Aorta (tissue), 5 donors: ENCODE measurements at regions of chr1 and their contacts with region 1.

Region 1: DNA sequence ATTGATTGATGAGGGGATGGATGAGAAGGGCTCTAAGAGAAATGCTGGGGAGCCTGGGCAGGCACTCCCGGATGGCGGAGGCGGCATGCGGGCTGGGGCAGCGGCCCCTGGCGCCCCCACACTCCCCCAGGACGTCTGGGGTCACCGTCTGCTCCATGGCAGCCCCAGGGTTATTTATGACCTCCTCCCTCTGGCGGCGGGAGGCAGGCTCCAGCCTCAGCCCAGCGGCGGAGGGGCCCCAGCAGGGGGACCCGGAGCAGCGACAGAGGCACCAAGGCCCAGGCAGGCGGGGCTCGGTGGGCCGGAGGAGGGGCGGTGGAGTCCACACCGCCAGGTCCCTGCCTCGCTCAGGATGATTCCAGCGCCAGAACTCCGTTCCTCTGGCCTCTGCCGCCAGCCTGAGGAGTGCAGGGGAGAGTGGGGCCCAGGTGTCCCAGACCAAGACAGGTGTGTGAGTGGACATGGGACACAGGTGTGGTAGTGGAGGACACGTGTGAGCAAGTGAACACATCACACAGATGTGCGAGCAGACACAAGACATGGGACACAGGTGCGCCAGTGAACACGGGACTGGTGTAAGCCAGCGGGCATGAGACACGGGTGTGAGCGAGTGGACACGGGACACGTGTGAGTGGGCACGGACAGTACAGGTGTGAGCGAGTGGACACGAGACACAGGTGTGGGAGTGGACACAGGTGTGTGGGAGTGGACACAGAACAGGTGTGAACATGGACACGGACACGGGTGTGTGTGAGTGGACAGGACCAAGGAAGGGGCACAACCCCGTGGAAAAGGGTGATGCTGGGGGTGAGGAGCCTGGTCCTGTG is 2.5 kb upstream of the SAMD11 start:
- DNase-seq: peak; percentile 78 to 91
- ATAC-seq: peak; percentile 78
- H3K4me3 ChIP-seq: no peak overlapping the region
- H3K27ac ChIP-seq: no peak overlapping the region
- H3K4me1 ChIP-seq: no peaks in the 10 kb centered on the region
- H3K27me3 ChIP-seq: no peaks in the 10 kb centered on the region

Region 2: DNA sequence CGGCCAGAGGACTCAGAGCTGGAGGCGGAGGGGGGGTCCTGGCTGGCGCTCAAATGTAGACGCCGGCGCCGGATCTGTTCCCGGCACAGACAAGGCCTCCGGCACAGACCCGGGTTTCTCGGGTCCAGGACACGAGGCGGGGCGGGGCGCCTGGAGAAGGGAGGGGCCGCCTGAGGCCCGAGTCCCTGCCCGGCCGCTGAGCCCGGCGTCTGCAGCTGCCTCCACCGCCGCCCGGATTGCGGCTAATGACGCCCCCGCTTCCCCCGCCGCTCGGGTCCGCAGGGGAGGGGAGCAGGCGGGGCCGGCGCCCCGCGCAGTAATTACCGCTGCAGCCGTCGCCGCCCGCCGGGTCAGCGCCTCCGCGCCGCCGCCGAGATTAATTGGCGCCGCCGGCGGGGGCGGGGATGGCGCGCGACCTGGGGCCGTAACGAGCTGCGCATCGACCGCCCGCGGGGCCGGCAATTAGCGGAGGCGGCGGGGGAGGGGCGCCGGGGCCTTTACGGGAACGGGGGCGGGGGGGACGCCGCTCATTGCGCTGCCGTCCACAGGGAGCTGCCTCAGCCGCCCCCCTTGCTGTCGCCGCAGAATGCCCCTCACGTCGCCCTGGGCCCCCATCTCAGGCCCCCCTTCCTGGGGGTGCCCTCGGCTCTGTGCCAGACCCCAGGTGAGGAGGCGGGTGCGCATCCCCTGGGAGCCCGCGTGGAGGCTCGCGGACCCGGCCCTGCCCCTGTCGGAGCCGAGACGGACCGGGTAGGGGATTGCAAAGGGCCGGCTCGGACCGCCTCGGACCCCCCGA is 20.6 kb after region 1 on chr1:
- intact Hi-C with region 1: loop called in 1 of 2 experiments (anchors 2 kb)
- DNase-seq: peak; percentile 90 to 94
- ATAC-seq: peak; percentile 79
- H3K4me3 ChIP-seq: peak overlapping the region in 1 of 2 donors; percentile 12
- H3K27ac ChIP-seq: no peak overlapping the region
- H3K4me1 ChIP-seq: no peaks in the 10 kb centered on the region
- H3K27me3 ChIP-seq: no peaks in the 10 kb centered on the region

Region 3: DNA sequence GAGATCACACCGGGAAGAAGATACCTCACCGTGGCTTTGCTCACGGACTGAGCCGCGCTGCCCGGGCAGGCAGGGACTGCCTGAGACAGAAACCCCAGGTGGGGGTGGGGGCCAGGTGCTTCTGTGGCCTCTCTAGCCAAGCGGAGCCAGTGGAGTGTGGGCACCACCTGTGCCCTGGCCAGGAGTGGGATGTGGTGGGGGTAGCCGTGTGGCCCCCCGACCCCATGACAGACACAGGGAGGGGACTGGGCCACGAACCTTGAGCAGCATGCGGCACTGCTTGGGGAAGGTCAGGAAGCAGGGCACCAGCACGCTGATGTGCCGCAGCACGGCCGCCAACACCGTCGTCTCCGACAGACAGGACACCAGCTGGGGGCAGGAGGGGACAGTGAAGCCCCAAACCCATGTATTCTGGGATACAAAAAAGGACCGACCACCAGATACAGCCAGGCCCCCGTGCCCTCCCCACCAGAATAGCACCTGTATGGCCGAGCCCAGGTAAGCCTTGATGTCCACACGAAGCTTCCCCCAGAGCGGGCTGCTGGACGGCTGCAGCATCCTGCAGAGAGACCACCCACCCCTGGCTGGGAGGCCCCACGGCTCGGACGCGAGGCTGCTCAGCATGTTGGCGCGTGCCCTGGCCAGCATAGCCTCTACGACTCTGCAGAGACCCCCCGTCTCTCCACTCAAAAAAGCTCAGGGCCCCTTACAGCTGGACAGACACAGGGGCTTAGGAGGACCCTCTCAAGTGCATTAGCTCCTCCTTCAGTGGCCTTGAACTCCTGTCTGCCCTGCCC is 32.5 kb after region 1 on chr1:
- intact Hi-C with region 1: no loop called
- DNase-seq: no peak
- ATAC-seq: no peak
- H3K4me3 ChIP-seq: no peak overlapping the region
- H3K27ac ChIP-seq: no peak overlapping the region
- H3K4me1 ChIP-seq: no peaks in the 10 kb centered on the region
- H3K27me3 ChIP-seq: no peaks in the 10 kb centered on the region

Region 4: GRCh38 chr1:999725-1000356 is 78.6 kb after region 1 on chr1 and contains the start of gene HES4:
- intact Hi-C with region 1: loop called in 1 of 2 experiments (anchors 10 kb)
- DNase-seq: peak; percentile 93 to 98
- ATAC-seq: peak; percentile 88
- H3K4me3 ChIP-seq: peak within 1 kb of the TSS; percentile 62 to 69
- H3K27ac ChIP-seq: peak within 1 kb of the TSS; percentile 87 to 95
- H3K4me1 ChIP-seq: no peaks in the 10 kb centered on the region
- H3K27me3 ChIP-seq: no peaks in the 10 kb centered on the region
- total RNA-seq, gene HES4: 31.3 to 47.5 TPM